CD4-positive, alpha-beta T cell (primary cell): ENCODE measurements at regions of chr11 and their contacts with region 1.

Region 1: DNA sequence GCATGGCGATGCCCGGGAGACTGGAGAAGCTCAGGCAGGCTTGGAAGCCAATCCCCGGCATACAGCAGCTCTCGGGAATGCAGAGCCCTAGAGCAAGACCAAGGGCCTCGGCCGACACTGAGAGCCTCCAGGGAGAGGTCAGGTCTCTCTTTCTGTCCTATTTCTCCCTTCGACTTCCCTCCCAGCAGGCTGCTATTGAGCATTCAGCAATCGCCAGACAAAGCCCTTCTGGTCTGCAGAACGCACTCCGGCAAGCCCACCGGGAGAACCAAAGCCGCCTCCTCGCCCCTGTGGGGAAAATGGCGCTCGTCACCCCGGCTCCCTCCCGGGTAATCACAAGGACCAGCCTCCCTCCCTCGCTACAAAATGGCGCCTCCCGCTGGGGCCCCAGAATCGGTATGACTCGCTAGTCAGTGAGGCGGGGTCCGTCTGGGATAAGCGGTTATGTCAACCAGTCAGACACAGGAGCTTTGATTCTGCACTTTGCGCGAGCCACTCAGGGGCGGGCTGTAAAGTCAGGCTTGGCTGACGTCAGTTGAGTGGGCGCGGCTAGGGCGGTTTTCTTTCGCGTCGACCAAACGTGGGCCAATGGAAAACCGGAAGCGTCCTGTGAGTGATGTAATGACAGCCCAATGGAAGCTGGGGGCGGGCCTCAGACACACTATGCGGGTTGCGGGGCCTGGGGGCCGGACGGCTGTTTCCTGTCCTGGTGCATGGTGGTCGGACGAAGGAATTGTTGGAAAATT is at the start of gene ZNF143:
- DNase-seq: peak; percentile 99 to 100 (median 100)
- ATAC-seq: peak; percentile 88
- H3K4me3 ChIP-seq: peak within 1 kb of the TSS; percentile 90
- H3K4me3 Mint-ChIP-seq: peak within 1 kb of the TSS; percentile 99
- H3K27ac ChIP-seq: peak within 1 kb of the TSS; percentile 95 to 97
- H3K27ac Mint-ChIP-seq: peak within 1 kb of the TSS; percentile 100
- H3K4me1 ChIP-seq: peaks cover 29% of the 10 kb centered on the region
- H3K4me1 Mint-ChIP-seq: peaks cover 30% of the 10 kb centered on the region
- H3K27me3 ChIP-seq: no peaks in the 10 kb centered on the region
- H3K27me3 Mint-ChIP-seq: no peaks in the 10 kb centered on the region
- CTCF ChIP-seq: no peak
- total RNA-seq, gene ZNF143: 18.0 to 20.3 TPM

Region 2: GRCh38 chr11:8964324-8965320 is 495.9 kb before region 1 on chr11 and contains the start of gene TMEM9B:
- CTCF ChIA-PET with region 1: no interaction called
- POLR2A ChIA-PET with region 1: interaction called, 16 read pairs
- intact Hi-C with region 1: loop called in 1 of 2 experiments (anchors 5 kb)
- DNase-seq: peak; percentile 50 to 87 (median 70)
- ATAC-seq: peak; percentile 72
- H3K4me3 ChIP-seq: peak within 1 kb of the TSS; percentile 98
- H3K4me3 Mint-ChIP-seq: peak within 1 kb of the TSS; percentile 97
- H3K27ac ChIP-seq: peak within 1 kb of the TSS; percentile 91 to 96
- H3K27ac Mint-ChIP-seq: peak within 1 kb of the TSS; percentile 97
- H3K4me1 ChIP-seq: peaks cover 28% of the 10 kb centered on the region
- H3K4me1 Mint-ChIP-seq: peaks cover 35% of the 10 kb centered on the region
- H3K27me3 ChIP-seq: no peaks in the 10 kb centered on the region
- H3K27me3 Mint-ChIP-seq: no peaks in the 10 kb centered on the region
- CTCF ChIP-seq: no peak
- total RNA-seq, gene TMEM9B: 20.5 to 22.1 TPM

Region 3: GRCh38 chr11:9280655-9281301 is 179.7 kb before region 1 on chr11:
- CTCF ChIA-PET with region 1: no interaction called
- POLR2A ChIA-PET with region 1: interaction called, 14 read pairs
- intact Hi-C with region 1: no loop called
- DNase-seq: peak in 13 of 14 experiments; percentile 27 to 85 (median 42)
- ATAC-seq: peak; percentile 92
- H3K4me3 ChIP-seq: peak overlapping the region; percentile 23
- H3K4me3 Mint-ChIP-seq: peak overlapping the region; percentile 67
- H3K27ac ChIP-seq: peak overlapping the region in 1 of 2 donors; percentile 29
- H3K27ac Mint-ChIP-seq: peak overlapping the region; percentile 72
- H3K4me1 ChIP-seq: peaks cover 13% of the 10 kb centered on the region
- H3K4me1 Mint-ChIP-seq: peaks cover 18% of the 10 kb centered on the region
- H3K27me3 ChIP-seq: no peaks in the 10 kb centered on the region
- H3K27me3 Mint-ChIP-seq: no peaks in the 10 kb centered on the region
- CTCF ChIP-seq: no peak

Region 4: DNA sequence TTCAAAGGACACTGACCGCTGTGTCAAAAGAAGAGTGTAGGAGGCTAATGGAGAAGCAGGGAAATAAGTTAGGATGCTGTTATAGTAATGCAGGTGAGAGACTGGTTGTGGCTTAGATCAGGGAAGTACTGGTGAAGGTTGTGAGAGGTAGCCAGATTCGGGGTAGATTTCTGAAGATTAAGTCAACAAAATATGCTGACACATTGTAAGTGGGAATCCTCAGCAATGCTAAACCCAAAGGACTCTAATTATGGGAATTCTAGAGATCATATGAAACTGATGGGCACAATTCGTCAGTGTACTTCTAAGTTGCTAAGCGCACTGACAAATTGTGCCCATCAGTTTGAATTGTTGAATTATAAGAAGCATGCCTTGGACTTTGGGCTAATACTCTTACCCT is 10.3 kb after region 1 on chr11:
- CTCF ChIA-PET with region 1: no interaction called
- POLR2A ChIA-PET with region 1: interaction called, 12 read pairs
- intact Hi-C with region 1: no loop called
- DNase-seq: no peak
- ATAC-seq: no peak
- H3K4me3 ChIP-seq: no peak overlapping the region
- H3K4me3 Mint-ChIP-seq: no peak overlapping the region
- H3K27ac ChIP-seq: no peak overlapping the region
- H3K27ac Mint-ChIP-seq: no peak overlapping the region
- H3K4me1 ChIP-seq: no peaks in the 10 kb centered on the region
- H3K4me1 Mint-ChIP-seq: peaks cover 11% of the 10 kb centered on the region
- H3K27me3 ChIP-seq: no peaks in the 10 kb centered on the region
- H3K27me3 Mint-ChIP-seq: no peaks in the 10 kb centered on the region
- CTCF ChIP-seq: no peak

Region 5: DNA sequence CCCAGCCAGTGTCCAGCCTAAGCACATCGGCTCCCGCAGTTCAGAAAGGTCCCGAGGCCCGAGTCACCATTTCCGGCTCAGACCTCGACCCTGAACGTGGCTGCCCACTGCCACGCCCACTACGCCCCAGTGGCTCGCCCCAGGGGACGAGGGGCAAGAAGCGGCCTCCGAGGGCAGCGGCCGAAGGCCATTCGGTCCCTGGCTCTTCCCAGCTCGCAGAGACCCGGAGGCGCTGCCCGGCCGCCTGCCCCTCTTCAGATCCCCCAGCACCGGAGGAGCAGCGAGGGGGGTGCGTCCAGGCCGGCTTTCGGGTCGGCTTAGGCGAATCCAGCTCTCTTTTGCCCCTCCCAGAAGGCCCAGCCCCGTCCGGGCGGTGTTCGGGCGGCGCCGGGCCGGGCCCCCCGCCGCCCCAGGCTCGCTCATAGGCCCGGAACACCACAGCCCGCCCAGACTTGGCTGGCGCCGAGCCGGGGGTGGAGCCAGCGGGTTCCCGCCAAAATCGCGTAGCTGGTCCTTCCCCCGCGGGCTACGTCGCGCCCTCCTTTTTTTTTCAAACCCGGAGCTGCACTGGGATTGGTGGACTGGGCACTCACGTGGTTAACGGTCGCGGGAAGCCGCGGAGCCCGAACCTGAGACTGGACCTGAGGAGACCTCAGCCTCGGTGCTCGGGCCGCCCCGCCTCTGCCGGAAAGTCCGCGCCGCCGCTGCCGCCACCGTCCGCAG is 112.7 kb after region 1 on chr11 and contains the start of gene WEE1:
- CTCF ChIA-PET with region 1: no interaction called
- POLR2A ChIA-PET with region 1: interaction called, 49 read pairs
- intact Hi-C with region 1: loop called in 1 of 2 experiments (anchors 5 kb)
- DNase-seq: peak; percentile 85 to 98 (median 94)
- ATAC-seq: peak; percentile 89
- H3K4me3 ChIP-seq: peak within 1 kb of the TSS; percentile 96
- H3K4me3 Mint-ChIP-seq: peak within 1 kb of the TSS; percentile 90
- H3K27ac ChIP-seq: peak within 1 kb of the TSS in 1 of 2 donors; percentile 69
- H3K27ac Mint-ChIP-seq: peak within 1 kb of the TSS; percentile 64
- H3K4me1 ChIP-seq: peaks cover 32% of the 10 kb centered on the region
- H3K4me1 Mint-ChIP-seq: peaks cover 46% of the 10 kb centered on the region
- H3K27me3 ChIP-seq: no peaks in the 10 kb centered on the region
- H3K27me3 Mint-ChIP-seq: peaks cover 15% of the 10 kb centered on the region
- CTCF ChIP-seq: no peak
- total RNA-seq, gene WEE1: 9.3 to 10.7 TPM

Region 6: GRCh38 chr11:10857709-10858438 is 1397.4 kb after region 1 on chr11 and contains the start of gene ZBED5:
- CTCF ChIA-PET with region 1: no interaction called
- POLR2A ChIA-PET with region 1: interaction called, 3 read pairs
- intact Hi-C with region 1: loop called in 1 of 2 experiments (anchors 5 kb)
- DNase-seq: peak; percentile 90 to 98 (median 94)
- ATAC-seq: peak; percentile 89
- H3K4me3 ChIP-seq: peak within 1 kb of the TSS; percentile 87
- H3K4me3 Mint-ChIP-seq: peak within 1 kb of the TSS; percentile 100
- H3K27ac ChIP-seq: peak within 1 kb of the TSS; percentile 92 to 96
- H3K27ac Mint-ChIP-seq: peak within 1 kb of the TSS; percentile 99
- H3K4me1 ChIP-seq: peaks cover 18% of the 10 kb centered on the region
- H3K4me1 Mint-ChIP-seq: peaks cover 66% of the 10 kb centered on the region
- H3K27me3 ChIP-seq: no peaks in the 10 kb centered on the region
- H3K27me3 Mint-ChIP-seq: no peaks in the 10 kb centered on the region
- CTCF ChIP-seq: no peak
- total RNA-seq, gene ZBED5: 71.1 to 72.0 TPM